HepG2 (cell line): ENCODE measurements at regions of chr9 and their contacts with region 1.

Region 1: GRCh38 chr9:104200456-104200994 is 106.4 kb downstream of the SMC2 start:
- DNase-seq: no peak
- ATAC-seq: no peak
- H3K4me3 ChIP-seq: no peak overlapping the region
- H3K27ac ChIP-seq: no peak overlapping the region
- H3K4me1 ChIP-seq: no peaks in the 10 kb centered on the region
- H3K27me3 ChIP-seq: no peaks in the 10 kb centered on the region
- CTCF ChIP-seq: no peak
- EP300 ChIP-seq: no peak
- POLR2A ChIP-seq: no peak
- RAD21 ChIP-seq: no peak

Region 2: DNA sequence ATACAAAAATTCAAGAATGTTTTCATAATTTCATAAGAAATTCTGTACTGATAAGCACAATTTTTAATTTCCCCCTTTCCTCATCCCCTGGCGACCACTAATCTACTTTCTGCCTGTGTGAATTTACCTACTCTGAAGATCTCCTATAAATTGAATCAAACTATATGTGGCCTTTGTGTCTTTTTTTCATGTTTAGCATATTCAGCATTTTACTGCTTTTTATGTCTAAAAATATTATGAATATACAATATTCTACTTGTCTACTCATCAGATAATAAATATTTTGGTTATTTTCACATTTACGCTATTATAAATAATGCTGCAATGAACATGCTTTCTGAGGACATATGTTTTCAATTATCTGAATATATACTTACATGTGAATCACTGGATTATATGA is 1060.6 kb before region 1 on chr9:
- CTCF ChIA-PET with region 1: no interaction called
- POLR2A ChIA-PET with region 1: no interaction called
- in situ Hi-C with region 1: no loop called
- intact Hi-C with region 1: loop called (anchors 10 kb)
- DNase-seq: no peak
- ATAC-seq: no peak
- H3K4me3 ChIP-seq: no peak overlapping the region
- H3K27ac ChIP-seq: no peak overlapping the region
- H3K4me1 ChIP-seq: no peaks in the 10 kb centered on the region
- H3K27me3 ChIP-seq: no peaks in the 10 kb centered on the region
- CTCF ChIP-seq: no peak
- EP300 ChIP-seq: no peak
- POLR2A ChIP-seq: no peak
- RAD21 ChIP-seq: no peak

Region 3: GRCh38 chr9:104068546-104068945 is 132.0 kb before region 1 on chr9:
- CTCF ChIA-PET with region 1: no interaction called
- POLR2A ChIA-PET with region 1: no interaction called
- in situ Hi-C with region 1: no loop called
- intact Hi-C with region 1: no loop called
- DNase-seq: no peak
- ATAC-seq: no peak
- H3K4me3 ChIP-seq: no peak overlapping the region
- H3K27ac ChIP-seq: no peak overlapping the region
- H3K4me1 ChIP-seq: peaks cover 12% of the 10 kb centered on the region; the same call in 1 of the 2 replicates
- H3K27me3 ChIP-seq: no peaks in the 10 kb centered on the region
- CTCF ChIP-seq: no peak
- EP300 ChIP-seq: no peak
- POLR2A ChIP-seq: no peak
- RAD21 ChIP-seq: no peak